Mammary epithelial cell (primary cell): ENCODE measurements at regions of chr16 and their contacts with region 1.

Region 1: GRCh38 chr16:71709231-71709781 is 15.2 kb downstream of the PHLPP2 start:
- DNase-seq: peak; percentile 41
- H3K4me3 ChIP-seq: peak overlapping the region in 1 of 3 experiments; percentile 2
- H3K27ac ChIP-seq: peak overlapping the region; percentile 16
- H3K4me1 ChIP-seq: peaks cover 32% of the 10 kb centered on the region
- H3K27me3 ChIP-seq: no peaks in the 10 kb centered on the region
- CTCF ChIP-seq: no peak

Region 2: GRCh38 chr16:71676236-71676635 is 33.1 kb before region 1 on chr16:
- CTCF ChIA-PET with region 1: no interaction called
- dilution Hi-C with region 1: no loop called
- in situ Hi-C with region 1: no loop called
- intact Hi-C with region 1: no loop called
- DNase-seq: no peak
- H3K4me3 ChIP-seq: no peak overlapping the region
- H3K27ac ChIP-seq: no peak overlapping the region
- H3K4me1 ChIP-seq: no peaks in the 10 kb centered on the region
- H3K27me3 ChIP-seq: no peaks in the 10 kb centered on the region
- CTCF ChIP-seq: no peak

Region 3: GRCh38 chr16:71723537-71724319 is 14.4 kb after region 1 on chr16:
- CTCF ChIA-PET with region 1: interaction called, 3 read pairs
- dilution Hi-C with region 1: no loop called
- in situ Hi-C with region 1: no loop called
- intact Hi-C with region 1: loop called (anchors 1 kb)
- DNase-seq: peak; percentile 57
- H3K4me3 ChIP-seq: peak overlapping the region; percentile 63 to 70 (median 64)
- H3K27ac ChIP-seq: peak overlapping the region; percentile 63
- H3K4me1 ChIP-seq: peaks cover 12% of the 10 kb centered on the region
- H3K27me3 ChIP-seq: no peaks in the 10 kb centered on the region
- CTCF ChIP-seq: no peak